Natural killer cell (primary cell): ENCODE measurements at regions of chr19 and their contacts with region 1.

Region 1: DNA sequence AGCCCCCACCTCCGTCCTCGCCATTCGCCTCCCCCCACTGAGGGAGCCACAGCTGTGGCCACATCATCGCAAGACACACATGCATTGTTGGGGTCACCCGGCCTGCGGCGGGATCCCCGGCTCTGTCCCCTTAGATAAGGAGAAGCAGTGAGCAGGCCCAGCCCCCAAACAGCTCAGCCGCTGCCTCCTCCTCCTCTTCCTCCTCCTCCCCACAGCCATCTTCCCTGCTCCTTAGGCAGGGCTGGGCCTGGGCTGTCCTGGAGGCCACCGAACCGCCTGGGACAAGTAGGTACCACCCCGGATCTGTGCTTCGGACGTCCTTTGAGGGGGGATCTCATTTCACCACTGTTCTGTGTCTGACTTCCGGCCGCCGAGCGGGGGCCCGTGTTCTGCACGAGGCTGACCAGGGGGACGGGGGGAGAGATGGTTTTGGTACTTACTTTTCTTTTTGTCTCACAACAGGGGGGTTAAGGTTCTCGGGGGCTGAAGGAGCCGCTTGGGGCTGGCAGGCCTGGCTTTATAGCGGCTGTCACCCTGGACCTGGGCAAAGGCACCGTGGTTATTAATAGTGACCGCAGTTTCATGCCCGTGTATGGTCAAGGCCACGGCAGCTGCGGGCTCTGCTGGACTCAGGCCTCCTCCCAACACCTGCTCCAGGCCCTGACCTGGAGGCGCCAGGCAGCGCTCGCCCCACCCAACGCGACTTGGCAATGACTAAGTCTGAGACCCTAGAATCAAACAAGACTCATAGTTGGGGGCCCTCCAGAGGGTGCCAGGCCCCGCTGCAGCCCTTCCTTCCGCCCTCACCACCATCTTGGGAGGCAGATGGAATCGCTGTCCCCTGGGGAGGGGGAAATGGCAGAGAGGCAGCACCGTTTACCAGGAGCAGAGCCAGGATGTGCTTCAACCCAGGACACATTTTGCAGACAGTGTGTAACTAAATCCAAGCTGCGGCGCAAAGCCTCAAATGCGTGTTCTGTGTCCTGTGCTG is 18.3 kb downstream of the NMRK2 start:
- DNase-seq: no peak
- ATAC-seq: peak; percentile 63 to 70 (median 68)
- H3K4me3 ChIP-seq: peak overlapping the region; percentile 33
- H3K4me3 Mint-ChIP-seq: peak overlapping the region; percentile 82
- H3K27ac ChIP-seq: peak overlapping the region; percentile 63
- H3K27ac Mint-ChIP-seq: peak overlapping the region; percentile 81 to 88
- H3K4me1 ChIP-seq: peaks cover 27% of the 10 kb centered on the region
- H3K4me1 Mint-ChIP-seq: peaks cover 13 to 15% of the 10 kb centered on the region in 2 donors
- H3K27me3 ChIP-seq: no peaks in the 10 kb centered on the region
- H3K27me3 Mint-ChIP-seq: no peaks in the 10 kb centered on the region
- CTCF ChIP-seq: no peak

Region 2: GRCh38 chr19:4042731-4043082 is 91.5 kb after region 1 on chr19:
- intact Hi-C with region 1: no loop called
- DNase-seq: no peak
- ATAC-seq: peak in 1 of 3 donors; percentile 7
- H3K4me3 ChIP-seq: no peak overlapping the region
- H3K4me3 Mint-ChIP-seq: no peak overlapping the region
- H3K27ac ChIP-seq: no peak overlapping the region
- H3K27ac Mint-ChIP-seq: peak overlapping the region in 1 of 2 donors; percentile 14
- H3K4me1 ChIP-seq: peaks cover 10% of the 10 kb centered on the region
- H3K4me1 Mint-ChIP-seq: peaks cover 0 to 24% of the 10 kb centered on the region in 2 donors
- H3K27me3 ChIP-seq: no peaks in the 10 kb centered on the region
- H3K27me3 Mint-ChIP-seq: no peaks in the 10 kb centered on the region
- CTCF ChIP-seq: no peak

Region 3: DNA sequence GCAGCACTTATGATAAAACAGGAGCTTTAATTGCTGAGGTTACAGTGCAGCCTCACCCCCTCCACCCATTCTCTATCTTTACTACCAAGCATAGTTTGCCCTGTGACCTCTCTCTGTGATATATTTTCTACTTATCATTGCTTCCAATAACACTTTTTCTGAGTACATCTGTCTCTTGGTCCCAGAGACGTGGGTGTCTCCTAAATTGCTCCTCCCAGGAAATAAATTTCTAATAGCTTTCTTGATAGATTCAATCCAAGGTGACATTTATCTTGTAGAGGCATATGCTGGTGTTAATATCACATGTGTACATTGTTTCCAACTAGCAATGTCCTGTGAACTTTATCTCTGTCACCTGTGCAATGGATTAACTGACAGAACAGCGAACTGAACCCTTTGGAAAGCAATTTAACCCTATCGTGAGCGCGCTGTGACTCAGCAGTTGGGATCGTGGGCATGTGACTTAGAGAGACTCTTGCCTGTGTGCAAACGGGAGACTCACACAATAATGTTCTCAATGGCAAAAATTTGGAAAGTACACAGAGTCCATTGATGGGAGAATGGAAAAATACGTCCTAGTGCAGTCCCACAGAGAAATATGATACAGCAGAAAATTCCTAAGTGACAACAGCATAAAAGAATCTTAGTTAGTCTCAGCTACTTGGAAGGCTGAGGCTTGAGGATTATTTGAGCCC is 179.7 kb after region 1 on chr19:
- intact Hi-C with region 1: no loop called
- DNase-seq: no peak
- ATAC-seq: no peak
- H3K4me3 ChIP-seq: no peak overlapping the region
- H3K4me3 Mint-ChIP-seq: no peak overlapping the region
- H3K27ac ChIP-seq: no peak overlapping the region
- H3K27ac Mint-ChIP-seq: no peak overlapping the region
- H3K4me1 ChIP-seq: no peaks in the 10 kb centered on the region
- H3K4me1 Mint-ChIP-seq: no peaks in the 10 kb centered on the region
- H3K27me3 ChIP-seq: no peaks in the 10 kb centered on the region
- H3K27me3 Mint-ChIP-seq: peaks cover 3 to 6% of the 10 kb centered on the region in 2 donors
- CTCF ChIP-seq: no peak

Region 4: DNA sequence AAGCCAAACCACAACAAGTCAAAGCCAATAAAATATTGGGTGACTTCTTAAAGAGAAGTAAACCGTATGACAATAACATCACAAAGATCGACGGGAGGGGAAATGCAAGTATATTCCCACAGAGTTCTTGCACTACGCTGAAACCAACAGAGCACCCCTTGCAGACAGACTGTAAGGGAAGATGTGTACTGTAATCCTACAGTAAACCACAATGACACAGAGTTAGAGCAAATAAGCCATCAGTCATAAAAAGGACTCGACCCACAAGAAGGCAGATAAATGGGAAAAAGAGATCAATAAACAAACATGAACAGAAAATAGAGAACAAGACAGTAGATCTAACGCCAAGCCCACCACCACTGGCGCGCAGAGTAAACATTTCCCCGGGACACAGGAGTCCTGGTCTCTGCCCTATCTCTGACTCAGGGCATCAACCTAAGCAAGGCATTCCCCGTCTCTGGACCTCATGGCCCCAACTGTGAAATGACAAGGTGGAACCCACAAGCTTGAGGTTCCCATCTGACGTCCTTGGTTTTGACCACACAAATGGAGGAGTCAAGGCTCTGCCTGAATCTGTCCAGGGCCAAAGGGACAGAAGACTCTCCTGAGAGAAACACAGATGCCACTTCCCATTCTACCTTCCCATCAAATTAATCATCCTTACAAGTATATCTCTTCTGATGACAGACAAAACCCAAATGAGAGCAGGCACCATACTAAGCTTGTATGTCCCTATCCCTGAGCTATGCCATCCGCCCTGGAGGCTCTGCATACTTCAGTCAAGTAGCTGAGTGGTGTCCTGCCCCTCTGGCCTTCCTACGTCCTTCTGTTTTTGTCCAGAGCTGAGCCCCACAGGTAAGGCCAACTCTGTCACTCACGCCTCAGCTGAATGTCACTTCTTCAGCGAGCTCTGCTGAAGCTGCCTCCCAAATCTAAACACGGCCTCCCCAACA is 1656.4 kb after region 1 on chr19:
- intact Hi-C with region 1: loop called (anchors 10 kb)
- DNase-seq: no peak
- ATAC-seq: no peak
- H3K4me3 ChIP-seq: no peak overlapping the region
- H3K4me3 Mint-ChIP-seq: no peak overlapping the region
- H3K27ac ChIP-seq: no peak overlapping the region
- H3K27ac Mint-ChIP-seq: no peak overlapping the region
- H3K4me1 ChIP-seq: no peaks in the 10 kb centered on the region
- H3K4me1 Mint-ChIP-seq: peaks cover 11 to 16% of the 10 kb centered on the region in 2 donors
- H3K27me3 ChIP-seq: no peaks in the 10 kb centered on the region
- H3K27me3 Mint-ChIP-seq: no peaks in the 10 kb centered on the region
- CTCF ChIP-seq: no peak